B cell (primary cell): ENCODE measurements at regions of chr16 and their contacts with region 1.

Region 1: DNA sequence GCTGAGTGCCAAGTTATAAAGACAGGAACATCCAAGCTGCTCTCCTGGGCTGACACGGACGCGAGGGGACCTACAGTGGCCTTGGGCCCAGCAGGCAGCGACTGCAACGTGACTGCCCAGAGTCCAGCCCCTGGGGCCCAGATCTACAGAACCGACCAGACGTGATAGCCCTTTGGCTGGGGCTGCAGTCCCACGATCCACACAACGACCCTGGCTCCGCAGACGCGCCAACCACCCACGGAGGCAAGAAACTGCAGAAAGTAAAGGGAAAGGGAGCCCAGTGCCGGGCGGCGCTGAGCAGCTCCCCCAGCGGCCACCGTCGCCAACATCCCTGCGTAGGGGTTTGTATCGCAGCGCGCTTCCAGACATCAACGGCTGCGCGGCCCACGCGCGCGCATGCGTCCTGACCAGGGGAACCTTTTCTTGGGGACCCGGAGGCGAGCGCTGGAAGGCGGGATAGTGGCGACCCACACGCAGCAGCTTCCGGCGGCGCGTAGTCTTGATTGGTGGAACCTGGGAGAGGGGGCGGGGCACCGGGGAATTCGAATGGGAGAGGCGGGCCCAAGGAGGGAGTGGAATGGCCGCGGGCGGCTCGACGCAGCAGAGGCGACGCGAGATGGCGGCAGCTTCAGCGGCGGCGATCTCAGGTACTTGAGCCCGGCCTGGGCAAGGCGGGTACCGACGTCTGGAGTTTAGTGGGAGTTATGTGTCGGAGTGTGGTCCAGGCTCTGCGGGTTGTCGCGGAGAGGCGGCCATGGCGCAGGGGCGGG is at the start of gene KIF22:
- DNase-seq: peak; percentile 100
- ATAC-seq: peak; percentile 96
- H3K4me3 ChIP-seq: peak within 1 kb of the TSS; percentile 65 to 93 (median 78)
- H3K4me3 Mint-ChIP-seq: peak within 1 kb of the TSS; percentile 99
- H3K27ac ChIP-seq: peak within 1 kb of the TSS; percentile 75 to 77
- H3K27ac Mint-ChIP-seq: peak within 1 kb of the TSS; percentile 99
- H3K4me1 ChIP-seq: peaks cover 19 to 34% of the 10 kb centered on the region in 2 donors
- H3K4me1 Mint-ChIP-seq: peaks cover 34% of the 10 kb centered on the region
- H3K27me3 ChIP-seq: no peaks in the 10 kb centered on the region
- H3K27me3 Mint-ChIP-seq: no peaks in the 10 kb centered on the region
- CTCF ChIP-seq: peak; percentile 84
- total RNA-seq, gene KIF22: 53.5 and 53.9 TPM in 2 replicates

Region 2: GRCh38 chr16:29729116-29729521 is 61.2 kb before region 1 on chr16:
- CTCF ChIA-PET with region 1: interaction called, 17 read pairs
- POLR2A ChIA-PET with region 1: no interaction called
- intact Hi-C with region 1: no loop called
- DNase-seq: peak; percentile 35
- ATAC-seq: peak; percentile 24
- H3K4me3 ChIP-seq: no peak overlapping the region
- H3K4me3 Mint-ChIP-seq: no peak overlapping the region
- H3K27ac ChIP-seq: no peak overlapping the region
- H3K27ac Mint-ChIP-seq: no peak overlapping the region
- H3K4me1 ChIP-seq: peaks cover 8 to 32% of the 10 kb centered on the region in 2 donors
- H3K4me1 Mint-ChIP-seq: peaks cover 24% of the 10 kb centered on the region
- H3K27me3 ChIP-seq: no peaks in the 10 kb centered on the region
- H3K27me3 Mint-ChIP-seq: no peaks in the 10 kb centered on the region
- CTCF ChIP-seq: no peak

Region 3: GRCh38 chr16:29745853-29746345 is 44.5 kb before region 1 on chr16 and contains the start of gene C16orf54:
- CTCF ChIA-PET with region 1: interaction called, 7 read pairs
- POLR2A ChIA-PET with region 1: interaction called, 11 read pairs
- intact Hi-C with region 1: loop called (anchors 1 kb)
- DNase-seq: peak; percentile 93
- ATAC-seq: peak; percentile 90
- H3K4me3 ChIP-seq: peak within 1 kb of the TSS; percentile 91 to 100 (median 97)
- H3K4me3 Mint-ChIP-seq: peak within 1 kb of the TSS; percentile 99
- H3K27ac ChIP-seq: peak within 1 kb of the TSS; percentile 95
- H3K27ac Mint-ChIP-seq: peak within 1 kb of the TSS; percentile 99
- H3K4me1 ChIP-seq: peaks cover 44 to 59% of the 10 kb centered on the region in 2 donors
- H3K4me1 Mint-ChIP-seq: peaks cover 64% of the 10 kb centered on the region
- H3K27me3 ChIP-seq: no peaks in the 10 kb centered on the region
- H3K27me3 Mint-ChIP-seq: no peaks in the 10 kb centered on the region
- CTCF ChIP-seq: no peak
- total RNA-seq, gene C16orf54: 64.4 and 68.3 TPM in 2 replicates

Region 4: GRCh38 chr16:29805378-29806098 is 15.2 kb after region 1 on chr16:
- CTCF ChIA-PET with region 1: interaction called, 17 read pairs
- POLR2A ChIA-PET with region 1: interaction called, 24 read pairs
- intact Hi-C with region 1: loop called (anchors 1 kb)
- DNase-seq: peak; percentile 99
- ATAC-seq: peak; percentile 69
- H3K4me3 ChIP-seq: peak overlapping the region; percentile 63 to 95 (median 89)
- H3K4me3 Mint-ChIP-seq: peak overlapping the region; percentile 98
- H3K27ac ChIP-seq: peak overlapping the region; percentile 87 to 91
- H3K27ac Mint-ChIP-seq: peak overlapping the region; percentile 100
- H3K4me1 ChIP-seq: peaks cover 43 to 48% of the 10 kb centered on the region in 2 donors
- H3K4me1 Mint-ChIP-seq: peaks cover 44% of the 10 kb centered on the region
- H3K27me3 ChIP-seq: no peaks in the 10 kb centered on the region
- H3K27me3 Mint-ChIP-seq: no peaks in the 10 kb centered on the region
- CTCF ChIP-seq: peak; percentile 13

Region 5: GRCh38 chr16:29848420-29849297 is 58.3 kb after region 1 on chr16:
- CTCF ChIA-PET with region 1: interaction called, 18 read pairs
- POLR2A ChIA-PET with region 1: no interaction called
- intact Hi-C with region 1: no loop called
- DNase-seq: peak; percentile 75
- ATAC-seq: peak; percentile 79
- H3K4me3 ChIP-seq: no peak overlapping the region
- H3K4me3 Mint-ChIP-seq: no peak overlapping the region
- H3K27ac ChIP-seq: no peak overlapping the region
- H3K27ac Mint-ChIP-seq: no peak overlapping the region
- H3K4me1 ChIP-seq: no peaks in the 10 kb centered on the region
- H3K4me1 Mint-ChIP-seq: no peaks in the 10 kb centered on the region
- H3K27me3 ChIP-seq: no peaks in the 10 kb centered on the region
- H3K27me3 Mint-ChIP-seq: no peaks in the 10 kb centered on the region
- CTCF ChIP-seq: peak; percentile 78

Region 6: GRCh38 chr16:29943846-29944669 is 153.7 kb after region 1 on chr16:
- CTCF ChIA-PET with region 1: no interaction called
- POLR2A ChIA-PET with region 1: no interaction called
- intact Hi-C with region 1: no loop called
- DNase-seq: no peak
- ATAC-seq: no peak
- H3K4me3 ChIP-seq: no peak overlapping the region
- H3K4me3 Mint-ChIP-seq: no peak overlapping the region
- H3K27ac ChIP-seq: no peak overlapping the region
- H3K27ac Mint-ChIP-seq: no peak overlapping the region
- H3K4me1 ChIP-seq: no peaks in the 10 kb centered on the region
- H3K4me1 Mint-ChIP-seq: no peaks in the 10 kb centered on the region
- H3K27me3 ChIP-seq: peaks cover 0 to 18% (median 6%) of the 10 kb centered on the region in 4 experiments
- H3K27me3 Mint-ChIP-seq: peaks cover 15% of the 10 kb centered on the region
- CTCF ChIP-seq: no peak

Region 7: DNA sequence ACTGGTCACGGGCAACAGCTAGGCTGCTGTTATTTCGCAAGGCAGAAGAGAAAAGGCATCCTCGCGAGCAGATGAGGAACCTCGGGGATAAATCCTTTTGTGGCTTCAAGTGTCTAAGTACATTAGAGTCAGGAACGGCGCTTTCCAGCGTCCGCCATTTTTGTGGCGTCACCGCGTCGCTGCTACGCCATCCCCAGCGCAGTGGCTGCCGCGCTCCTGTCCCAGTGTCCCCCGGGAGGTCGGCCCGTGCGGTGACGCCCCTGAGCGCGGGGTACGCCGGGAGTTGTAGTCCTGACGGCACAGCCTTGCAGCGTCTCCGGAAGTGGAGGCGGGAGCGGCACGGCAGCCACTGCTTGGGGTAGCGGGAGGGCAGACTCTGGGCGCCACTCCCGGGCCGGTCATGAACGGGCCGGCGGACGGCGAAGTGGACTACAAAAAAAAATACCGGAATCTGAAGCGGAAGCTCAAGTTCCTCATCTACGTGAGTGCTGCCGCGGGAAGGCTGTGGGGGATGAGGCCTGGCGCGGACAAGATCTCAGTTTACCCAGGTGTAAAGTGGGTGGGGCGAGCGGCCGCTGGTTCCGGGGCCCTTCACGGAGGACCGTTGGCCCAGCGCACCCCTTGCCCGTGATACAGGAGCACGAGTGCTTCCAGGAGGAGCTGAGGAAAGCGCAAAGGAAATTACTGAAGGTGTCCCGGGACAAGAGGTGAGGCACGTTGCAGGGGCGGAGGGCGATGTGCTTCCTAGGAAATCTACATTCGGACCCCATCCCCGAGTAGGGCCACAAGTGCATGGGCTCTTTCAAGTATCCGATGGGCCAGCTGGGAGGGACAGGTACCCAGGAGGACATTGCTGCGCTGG is 205.8 kb after region 1 on chr16 and contains the start of gene INO80E:
- CTCF ChIA-PET with region 1: no interaction called
- POLR2A ChIA-PET with region 1: no interaction called
- intact Hi-C with region 1: loop called (anchors 2 kb)
- DNase-seq: peak; percentile 97
- ATAC-seq: peak; percentile 96
- H3K4me3 ChIP-seq: peak within 1 kb of the TSS; percentile 89 to 100 (median 98)
- H3K4me3 Mint-ChIP-seq: peak within 1 kb of the TSS; percentile 98
- H3K27ac ChIP-seq: peak within 1 kb of the TSS; percentile 94 to 97
- H3K27ac Mint-ChIP-seq: peak within 1 kb of the TSS; percentile 94
- H3K4me1 ChIP-seq: peaks cover 15 to 22% of the 10 kb centered on the region in 2 donors
- H3K4me1 Mint-ChIP-seq: peaks cover 43% of the 10 kb centered on the region
- H3K27me3 ChIP-seq: no peaks in the 10 kb centered on the region
- H3K27me3 Mint-ChIP-seq: no peaks in the 10 kb centered on the region
- CTCF ChIP-seq: no peak
- total RNA-seq, gene INO80E: 113 and 119 TPM in 2 replicates